HEK293T (cell line): ENCODE measurements at regions of chr10 and their contacts with region 1.

Region 1: GRCh38 chr10:21364196-21365114 is 161.0 kb downstream of the SKIDA1 start:
- DNase-seq: no peak

Region 2: DNA sequence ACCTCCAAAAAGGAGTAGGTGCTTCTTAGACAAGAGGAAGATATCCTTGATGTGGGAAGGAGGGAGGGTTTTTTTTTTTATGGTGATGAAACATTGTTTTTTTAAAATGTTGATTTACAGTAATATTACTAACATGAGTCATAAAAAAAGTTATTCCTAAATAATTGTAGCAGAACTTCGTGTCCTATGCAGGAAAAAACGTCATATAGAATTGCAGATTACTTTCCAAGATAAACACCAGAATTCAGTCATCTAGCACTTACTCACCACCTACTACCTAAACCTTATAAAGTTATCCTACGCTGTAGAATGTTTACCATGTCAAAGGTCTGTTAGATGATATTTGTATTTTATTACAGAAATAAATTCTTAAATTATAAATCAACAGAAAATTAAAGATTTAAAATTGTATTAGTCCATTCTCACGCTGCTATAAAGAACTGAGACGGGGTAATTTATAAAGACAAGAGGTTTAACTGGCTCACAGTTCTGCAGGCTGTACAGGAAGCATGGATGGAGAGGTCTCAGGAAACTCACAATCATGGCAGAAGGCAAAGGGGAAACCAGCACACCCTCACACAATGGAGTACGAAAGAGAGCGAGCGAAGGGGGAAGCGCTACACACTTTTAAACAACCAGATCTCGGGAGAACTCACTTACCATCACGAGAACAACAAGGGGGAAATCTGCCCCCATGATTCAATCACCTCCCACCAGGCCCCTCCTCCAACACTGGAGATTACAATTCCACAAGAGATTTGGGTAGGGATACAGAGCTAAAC is 362.2 kb before region 1 on chr10:
- CTCF ChIA-PET with region 1: interaction called, 10 read pairs
- POLR2A ChIA-PET with region 1: no interaction called
- DNase-seq: no peak